ENCODE measurements at regions of chr7 and their contacts with region 1.

Region 1: DNA sequence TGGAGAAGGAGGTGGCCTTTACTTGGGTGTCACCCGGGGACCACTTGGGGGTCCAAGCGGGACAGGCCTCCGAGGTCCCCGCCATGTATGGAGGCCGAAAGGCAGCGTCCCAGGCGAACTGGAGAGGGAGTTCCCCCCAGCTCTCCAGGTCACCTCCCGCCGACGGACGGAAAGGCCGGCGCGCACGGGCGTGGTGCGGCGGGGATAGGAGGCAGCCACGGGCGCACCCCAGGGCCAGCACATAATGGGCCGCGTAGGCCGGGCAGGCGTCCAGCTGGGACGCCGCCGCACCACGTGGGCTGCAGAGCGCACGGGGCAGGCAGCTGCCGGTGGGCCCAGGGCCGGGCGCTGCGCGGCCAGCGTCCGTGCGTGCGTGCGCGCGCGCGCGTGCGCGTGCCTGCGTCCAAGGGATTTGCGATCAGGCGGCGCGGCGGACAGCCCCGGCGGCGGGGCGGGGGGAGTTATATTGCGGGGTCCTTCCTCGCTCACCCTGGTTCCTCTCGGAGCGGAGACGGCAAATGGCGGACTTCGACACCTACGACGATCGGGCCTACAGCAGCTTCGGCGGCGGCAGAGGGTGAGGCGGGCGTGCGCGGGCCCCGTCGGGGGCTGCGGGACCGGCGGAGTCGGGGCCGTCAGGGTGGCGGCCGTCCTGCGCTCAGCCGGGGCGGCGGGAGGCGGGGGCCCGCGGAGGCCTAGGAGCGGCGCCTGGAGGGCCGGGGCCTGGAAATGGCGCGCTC is at the start of gene EIF4H:
- DNase-seq: peak; percentile 98

Region 2: DNA sequence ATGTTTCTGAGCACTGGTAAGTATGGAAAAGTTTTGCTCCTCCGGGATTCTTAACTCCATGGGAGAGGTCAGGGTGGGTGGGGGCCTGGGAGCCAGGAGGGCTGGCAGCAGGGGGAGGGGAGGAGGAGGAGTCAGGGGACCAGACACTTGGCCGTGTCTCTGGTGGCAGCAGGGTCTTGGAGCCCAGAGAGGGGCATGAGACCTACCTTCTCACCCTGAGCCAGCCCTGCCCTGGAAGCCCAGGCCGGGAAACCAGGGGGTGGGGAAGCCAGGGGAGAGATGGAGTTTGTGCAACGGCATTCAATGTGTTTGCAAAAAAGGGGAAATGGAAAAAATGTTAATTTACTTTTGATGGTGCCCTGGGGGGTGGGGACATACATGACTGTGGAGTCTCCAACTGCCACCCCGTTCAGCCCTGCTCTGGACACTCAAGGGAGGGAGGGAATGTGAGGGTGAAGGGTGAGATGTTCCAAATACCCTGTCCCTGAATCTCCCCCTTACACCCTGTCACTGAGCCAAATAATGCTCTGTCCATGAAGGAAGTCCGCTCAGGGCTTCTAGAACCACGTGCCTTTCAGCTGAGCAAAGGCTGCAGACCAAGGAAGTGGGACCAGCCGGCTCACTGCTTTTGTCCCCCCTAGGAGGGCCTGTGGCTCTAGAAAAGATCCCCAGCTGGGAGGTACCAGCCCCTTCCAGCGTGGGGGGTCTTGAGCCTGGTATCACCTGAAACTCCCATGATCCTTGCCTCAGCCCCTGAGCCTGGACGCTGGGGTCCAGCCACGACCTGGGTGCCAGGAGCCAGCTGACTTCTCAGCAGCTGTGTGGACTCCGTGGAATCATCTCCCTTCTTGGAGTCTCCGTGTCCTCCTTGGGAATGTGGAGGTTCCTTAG is 264.7 kb before region 1 on chr7:
- in situ Hi-C with region 1: no loop called
- DNase-seq: no peak

Region 3: DNA sequence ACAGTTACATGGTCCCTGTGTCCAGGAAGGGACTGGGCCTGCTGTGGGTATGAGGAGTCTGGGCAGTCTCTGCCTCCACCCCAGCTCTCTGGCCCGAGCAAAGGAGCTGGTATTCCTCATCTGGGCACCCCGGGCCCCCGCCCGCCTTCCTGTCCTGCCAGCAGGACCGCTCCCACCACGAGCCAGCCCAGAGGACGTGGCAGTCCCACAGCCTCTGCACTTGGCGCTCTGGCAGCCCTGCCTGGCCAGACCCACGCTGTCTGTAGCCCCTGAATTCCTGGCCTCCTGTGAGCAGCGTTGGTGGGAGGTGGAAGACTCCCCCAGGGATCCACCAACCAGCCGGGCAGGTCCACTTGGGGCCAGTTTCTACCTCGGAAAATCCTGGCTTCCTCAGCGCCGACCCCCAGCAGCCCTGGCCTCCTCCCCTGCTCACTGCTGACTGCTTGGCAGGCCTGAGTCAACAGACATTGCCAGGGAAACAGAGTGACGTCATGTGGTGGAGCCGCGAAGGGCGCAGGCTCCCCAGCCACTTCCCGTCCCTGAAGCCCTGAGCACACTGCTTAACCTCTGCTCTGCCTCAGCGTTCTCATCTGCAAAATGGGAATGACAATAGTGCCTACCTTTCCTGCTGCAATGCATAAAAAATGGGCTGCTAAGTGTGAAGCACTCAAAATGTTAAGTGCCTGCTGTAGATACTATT is 112.0 kb before region 1 on chr7:
- in situ Hi-C with region 1: loop called (anchors 10 kb)
- DNase-seq: peak; percentile 98

Region 4: GRCh38 chr7:74379938-74380337 is 205.9 kb after region 1 on chr7:
- in situ Hi-C with region 1: loop called (anchors 25 kb)
- DNase-seq: no peak

Measured in ACHN (cell line).